Activated naive CD4-positive, alpha-beta T cell treated with anti-CD3 and anti-CD28 coated beads for 36 hours (primary cell): ENCODE measurements at regions of chr1 and their contacts with region 1.

Region 1: DNA sequence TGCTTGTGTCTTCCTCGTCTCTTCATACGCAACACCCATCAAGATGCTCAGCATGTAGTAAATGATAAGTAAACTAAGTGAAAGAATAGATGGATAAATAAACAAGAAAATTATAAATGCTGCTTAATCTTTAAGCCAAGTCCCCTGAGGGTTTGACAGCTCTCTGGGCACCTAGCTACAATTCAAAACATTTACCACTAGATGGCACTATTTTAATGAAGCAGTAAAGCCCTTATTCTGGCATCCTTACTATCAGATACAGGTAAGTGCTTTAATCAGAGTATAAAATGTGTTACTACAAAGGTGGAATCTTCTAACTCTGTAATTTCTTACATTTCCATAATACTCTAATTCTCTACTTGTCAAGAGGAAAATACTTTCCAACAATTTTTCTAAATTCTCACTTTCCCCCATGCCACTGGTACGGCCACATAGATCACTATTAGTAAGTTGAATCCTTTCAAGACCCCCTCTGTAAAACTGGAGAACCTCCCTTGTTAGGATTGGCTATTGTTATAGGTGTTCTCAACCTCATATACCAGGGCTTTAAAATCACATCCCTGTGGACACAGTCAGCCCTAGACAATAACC is 137.8 kb downstream of the BARHL2 start:
- DNase-seq: no peak
- H3K4me3 Mint-ChIP-seq: no peak overlapping the region
- H3K27ac Mint-ChIP-seq: no peak overlapping the region
- H3K4me1 Mint-ChIP-seq: no peaks in the 10 kb centered on the region
- H3K27me3 Mint-ChIP-seq: peaks cover 6% of the 10 kb centered on the region

Region 2: GRCh38 chr1:90133133-90133532 is 446.2 kb before region 1 on chr1:
- CTCF ChIA-PET with region 1: interaction called, 3 read pairs
- intact Hi-C with region 1: loop called (anchors 5 kb)
- DNase-seq: peak; percentile 31
- H3K4me3 Mint-ChIP-seq: no peak overlapping the region
- H3K27ac Mint-ChIP-seq: no peak overlapping the region
- H3K4me1 Mint-ChIP-seq: no peaks in the 10 kb centered on the region
- H3K27me3 Mint-ChIP-seq: peaks cover 15% of the 10 kb centered on the region

Region 3: DNA sequence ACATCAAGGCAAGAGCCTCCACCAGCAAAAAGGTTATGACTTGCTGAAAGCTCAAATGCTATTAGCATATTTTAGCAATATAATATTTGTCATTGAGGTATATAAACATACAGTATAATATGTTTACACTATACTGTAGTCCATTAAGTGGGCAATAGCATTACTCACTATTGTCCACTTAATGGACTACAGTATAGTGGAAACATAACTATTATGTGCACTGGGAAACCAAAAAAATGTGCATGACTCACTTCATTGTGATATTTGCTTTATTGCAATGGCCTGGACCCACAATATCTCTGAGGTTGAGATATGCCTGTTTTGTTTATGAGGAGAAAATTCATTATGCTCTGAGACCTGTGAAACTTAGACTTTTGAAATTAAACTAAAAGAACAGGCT is 162.2 kb before region 1 on chr1:
- CTCF ChIA-PET with region 1: no interaction called
- intact Hi-C with region 1: no loop called
- DNase-seq: no peak
- H3K4me3 Mint-ChIP-seq: no peak overlapping the region
- H3K27ac Mint-ChIP-seq: no peak overlapping the region
- H3K4me1 Mint-ChIP-seq: no peaks in the 10 kb centered on the region
- H3K27me3 Mint-ChIP-seq: peaks cover 8% of the 10 kb centered on the region

Region 4: DNA sequence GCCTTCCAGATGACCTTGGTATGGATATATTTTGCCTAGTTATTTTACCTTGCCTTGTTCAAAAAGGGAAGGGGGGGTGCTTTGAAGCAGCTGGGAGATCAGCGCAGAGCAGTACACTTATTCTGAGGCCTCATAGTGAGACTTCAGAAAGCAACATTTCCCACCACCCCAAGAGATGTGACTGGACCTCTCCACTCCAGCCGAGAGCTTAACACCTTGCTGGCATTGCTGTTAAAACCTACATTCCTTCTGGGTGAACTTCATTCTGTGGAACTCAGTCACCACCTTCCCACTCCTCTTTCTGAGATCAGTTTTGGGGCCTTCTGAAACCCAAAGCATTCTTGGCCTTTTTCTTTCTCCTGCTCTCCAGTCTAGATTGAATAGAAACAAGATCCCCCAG is 10.9 kb before region 1 on chr1:
- CTCF ChIA-PET with region 1: interaction called, 10 read pairs
- intact Hi-C with region 1: no loop called
- DNase-seq: no peak
- H3K4me3 Mint-ChIP-seq: no peak overlapping the region
- H3K27ac Mint-ChIP-seq: no peak overlapping the region
- H3K4me1 Mint-ChIP-seq: no peaks in the 10 kb centered on the region
- H3K27me3 Mint-ChIP-seq: peaks cover 8% of the 10 kb centered on the region

Region 5: GRCh38 chr1:90621986-90622385 is 42.7 kb after region 1 on chr1:
- CTCF ChIA-PET with region 1: no interaction called
- intact Hi-C with region 1: no loop called
- DNase-seq: no peak
- H3K4me3 Mint-ChIP-seq: no peak overlapping the region
- H3K27ac Mint-ChIP-seq: no peak overlapping the region
- H3K4me1 Mint-ChIP-seq: no peaks in the 10 kb centered on the region
- H3K27me3 Mint-ChIP-seq: peaks cover 13% of the 10 kb centered on the region

Region 6: GRCh38 chr1:90964444-90965035 is 385.2 kb after region 1 on chr1:
- CTCF ChIA-PET with region 1: no interaction called
- intact Hi-C with region 1: loop called (anchors 2 kb)
- DNase-seq: no peak
- H3K4me3 Mint-ChIP-seq: no peak overlapping the region
- H3K27ac Mint-ChIP-seq: no peak overlapping the region
- H3K4me1 Mint-ChIP-seq: peaks cover 40% of the 10 kb centered on the region
- H3K27me3 Mint-ChIP-seq: no peaks in the 10 kb centered on the region